ENCODE measurements at regions of chr2 and their contacts with region 1.

Region 1: GRCh38 chr2:70919672-70920366 is 15.9 kb upstream of the ATP6V1B1 start:
- DNase-seq: peak; percentile 84 to 93
- H3K4me3 ChIP-seq: no peak overlapping the region
- H3K4me3 Mint-ChIP-seq: no peak overlapping the region
- H3K27ac Mint-ChIP-seq: no peak overlapping the region
- H3K4me1 ChIP-seq: peaks cover 6% of the 10 kb centered on the region; the same call in 1 of the 2 replicates
- H3K4me1 Mint-ChIP-seq: no peaks in the 10 kb centered on the region
- H3K27me3 ChIP-seq: no peaks in the 10 kb centered on the region
- H3K27me3 Mint-ChIP-seq: peaks cover 5% of the 10 kb centered on the region
- CTCF ChIP-seq: peak; percentile 94 to 96

Region 2: GRCh38 chr2:70871398-70872211 is 48.2 kb before region 1 on chr2:
- CTCF ChIA-PET with region 1: interaction called, 12 read pairs
- POLR2A ChIA-PET with region 1: no interaction called
- intact Hi-C with region 1: loop called (anchors 1 kb)
- DNase-seq: peak; percentile 86 to 93
- H3K4me3 ChIP-seq: no peak overlapping the region
- H3K4me3 Mint-ChIP-seq: peak overlapping the region; percentile 50
- H3K27ac Mint-ChIP-seq: no peak overlapping the region
- H3K4me1 ChIP-seq: 0 out of 2 replicates have a peak, but pooled peaks cover 8% of the 10 kb centered on the region
- H3K4me1 Mint-ChIP-seq: no peaks in the 10 kb centered on the region
- H3K27me3 ChIP-seq: no peaks in the 10 kb centered on the region; the same call in 1 of the 2 replicates
- H3K27me3 Mint-ChIP-seq: peaks cover 6% of the 10 kb centered on the region
- CTCF ChIP-seq: peak; percentile 97 to 98

Region 3: DNA sequence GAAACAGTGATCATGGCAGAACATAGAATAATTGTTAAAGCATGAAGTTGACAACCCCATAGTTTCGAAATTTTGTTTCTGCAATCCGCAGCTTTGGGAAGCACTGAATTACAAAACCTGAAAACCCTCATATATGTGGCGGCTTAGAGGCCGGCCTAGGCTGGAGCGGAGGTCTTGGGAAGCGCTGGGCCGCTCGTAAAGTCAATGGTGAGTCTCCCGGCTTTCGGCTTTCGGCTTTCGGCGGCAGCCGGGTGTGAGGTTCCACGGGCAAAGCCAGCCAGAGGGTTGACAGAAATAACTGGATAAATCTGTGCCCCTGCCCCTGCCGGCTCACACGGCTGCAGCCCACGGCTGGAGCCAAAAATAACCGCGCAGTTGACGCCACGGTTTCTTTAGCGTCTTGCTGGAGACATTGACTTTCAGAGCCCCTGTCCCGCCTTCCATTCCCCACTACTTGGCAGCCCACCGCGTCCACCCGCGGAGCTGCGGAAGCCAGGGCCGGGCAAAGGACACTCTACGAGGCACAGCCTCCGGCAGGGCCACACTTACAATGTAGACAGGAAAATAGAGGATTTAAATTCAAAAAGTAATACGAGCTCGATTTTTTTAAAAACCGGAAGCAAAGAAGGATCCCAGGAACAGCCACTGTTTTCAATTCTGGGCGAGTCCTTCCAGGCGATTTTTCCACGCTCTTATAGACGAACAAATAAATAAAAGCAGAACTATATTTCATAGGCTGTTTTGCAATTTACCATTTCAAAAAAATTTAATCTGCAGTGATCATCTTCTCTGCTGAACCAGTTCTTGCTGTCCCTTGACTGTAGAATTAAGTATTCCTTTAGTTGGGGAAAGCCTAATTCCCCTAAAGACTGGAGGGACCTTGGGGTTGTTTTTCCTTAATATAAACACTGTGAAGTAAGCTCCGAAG is 12.4 kb before region 1 on chr2:
- CTCF ChIA-PET with region 1: no interaction called
- POLR2A ChIA-PET with region 1: no interaction called
- intact Hi-C with region 1: no loop called
- DNase-seq: no peak
- H3K4me3 ChIP-seq: no peak overlapping the region
- H3K4me3 Mint-ChIP-seq: no peak overlapping the region
- H3K27ac Mint-ChIP-seq: no peak overlapping the region
- H3K4me1 ChIP-seq: peaks cover 8% of the 10 kb centered on the region; the same call in 1 of the 2 replicates
- H3K4me1 Mint-ChIP-seq: no peaks in the 10 kb centered on the region
- H3K27me3 ChIP-seq: no peaks in the 10 kb centered on the region
- H3K27me3 Mint-ChIP-seq: no peaks in the 10 kb centered on the region
- CTCF ChIP-seq: no peak